ENCODE measurements at regions of chr1 and their contacts with region 1.

Region 1: DNA sequence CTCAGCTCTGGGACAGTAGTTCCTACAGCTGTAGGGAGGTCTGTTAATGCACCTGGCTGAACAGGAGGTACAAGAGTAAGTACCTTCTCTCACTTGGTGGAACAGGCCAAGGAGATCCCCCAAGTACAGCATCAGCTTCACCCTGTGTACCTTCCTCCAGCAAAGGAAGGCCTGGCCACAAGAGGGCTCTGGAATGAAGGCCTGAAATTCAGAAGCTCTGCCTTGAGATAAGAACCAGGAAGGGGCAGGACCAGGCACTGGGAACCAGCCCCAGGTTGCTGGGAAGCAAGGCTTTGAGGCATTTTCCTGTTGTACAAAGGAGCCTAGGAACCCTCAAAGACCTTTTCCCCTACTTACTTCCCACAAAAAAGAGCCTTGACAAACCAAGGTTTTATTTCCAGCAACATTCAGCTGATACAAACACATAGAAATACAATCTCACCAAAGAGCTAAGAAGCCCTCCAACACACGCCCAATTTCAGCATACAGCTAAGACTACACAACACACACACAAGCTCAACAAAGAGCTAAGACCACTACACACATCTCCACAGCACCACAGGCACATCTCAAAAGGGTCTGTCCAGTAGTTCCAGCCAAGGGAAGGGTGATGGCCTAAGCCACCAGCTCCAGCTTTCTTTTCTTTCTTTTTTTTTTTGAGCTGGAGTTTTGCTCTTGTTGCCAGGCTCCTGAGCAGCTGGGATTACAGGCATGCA is 23.5 kb downstream of the F11R start:
- DNase-seq: peak; percentile 36 to 54 (median 53)
- H3K4me3 ChIP-seq: no peak overlapping the region
- H3K4me3 Mint-ChIP-seq: no peak overlapping the region
- H3K27ac ChIP-seq: peak overlapping the region; percentile 12 to 61
- H3K27ac Mint-ChIP-seq: peak overlapping the region; percentile 15 to 84 (median 40)
- H3K4me1 ChIP-seq: peaks cover 4 to 5% of the 10 kb centered on the region in 2 donors
- H3K4me1 Mint-ChIP-seq: peaks cover 10% of the 10 kb centered on the region
- H3K27me3 ChIP-seq: no peaks in the 10 kb centered on the region
- H3K27me3 Mint-ChIP-seq: peaks cover 0 to 1% (median 0%) of the 10 kb centered on the region in 3 donors
- CTCF ChIP-seq: peak; percentile 70

Region 2: DNA sequence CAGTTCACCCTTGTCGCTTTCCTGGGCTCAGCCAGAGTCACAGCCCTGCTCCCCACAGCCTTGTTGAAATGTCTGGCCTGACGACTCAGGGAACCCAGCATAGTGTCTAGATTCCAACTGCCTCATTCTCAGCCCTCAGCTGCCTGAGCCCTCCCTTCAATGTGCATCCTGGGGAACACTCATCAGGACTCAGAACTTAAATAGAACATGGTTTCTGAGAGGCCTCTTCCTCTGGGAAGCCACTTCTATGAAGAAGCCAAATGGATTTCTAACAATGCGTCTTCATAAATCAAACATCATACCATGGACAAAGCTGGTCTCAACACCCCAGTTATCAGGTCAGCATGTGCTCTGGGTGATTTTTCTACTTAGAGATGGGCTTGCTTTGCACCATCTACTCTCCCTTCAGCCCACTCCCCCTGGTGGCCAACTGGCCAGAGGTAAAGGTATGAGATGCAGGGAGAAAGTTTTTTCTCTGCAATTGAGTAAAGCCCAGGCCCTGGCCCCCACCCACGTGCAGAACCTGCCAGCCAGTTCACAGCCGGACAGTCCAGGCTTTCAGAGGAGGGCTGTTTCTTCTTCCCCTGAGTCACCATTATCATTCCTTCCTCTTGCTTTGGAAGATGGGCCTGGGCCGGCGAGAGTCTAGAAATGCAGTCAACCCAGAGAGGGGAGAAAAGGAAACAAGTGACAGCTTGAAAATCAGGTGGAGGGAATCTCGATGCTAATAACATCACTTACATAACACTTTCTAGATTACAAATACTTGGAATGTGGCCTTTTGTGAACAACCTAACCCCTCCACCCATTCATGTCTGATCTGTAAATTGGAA is 166.9 kb before region 1 on chr1:
- intact Hi-C with region 1: loop called in 1 of 2 experiments (anchors 5 kb)
- DNase-seq: peak in 2 of 3 donors; percentile 27 to 46
- H3K4me3 ChIP-seq: no peak overlapping the region
- H3K4me3 Mint-ChIP-seq: no peak overlapping the region
- H3K27ac ChIP-seq: no peak overlapping the region
- H3K27ac Mint-ChIP-seq: peak overlapping the region in 3 of 7 donors; percentile 23 to 35 (median 26)
- H3K4me1 ChIP-seq: peaks cover 0 to 5% of the 10 kb centered on the region in 2 donors
- H3K4me1 Mint-ChIP-seq: peaks cover 11% of the 10 kb centered on the region
- H3K27me3 ChIP-seq: no peaks in the 10 kb centered on the region
- H3K27me3 Mint-ChIP-seq: peaks cover 0 to 2% (median 0%) of the 10 kb centered on the region in 3 donors
- CTCF ChIP-seq: peak; percentile 56

Region 3: DNA sequence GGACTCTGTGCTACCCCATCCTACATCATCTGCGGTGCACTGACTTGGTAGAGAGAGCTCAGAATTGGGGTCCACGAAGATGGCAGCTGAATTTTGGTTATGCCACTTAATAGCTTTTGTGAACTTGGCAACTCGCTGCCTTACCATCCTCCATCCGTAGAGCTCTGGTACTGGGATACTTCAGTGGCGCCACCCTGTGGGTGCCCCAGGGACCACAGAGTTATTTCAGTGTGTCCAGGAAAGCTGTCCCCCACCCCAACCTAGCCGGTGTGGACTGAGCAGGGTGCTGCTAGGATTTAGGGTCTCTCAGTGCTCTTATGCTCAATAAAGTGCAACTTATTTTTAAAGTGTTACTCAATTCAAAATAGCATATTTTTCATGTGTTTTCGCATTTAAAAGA is 57.3 kb after region 1 on chr1:
- intact Hi-C with region 1: loop called in 1 of 2 experiments (anchors 10 kb)
- DNase-seq: peak in 1 of 3 donors; percentile 43
- H3K4me3 ChIP-seq: no peak overlapping the region
- H3K4me3 Mint-ChIP-seq: no peak overlapping the region
- H3K27ac ChIP-seq: peak overlapping the region in 1 of 2 donors; percentile 24
- H3K27ac Mint-ChIP-seq: peak overlapping the region in 2 of 7 donors; percentile 22 to 52
- H3K4me1 ChIP-seq: peaks cover 2 to 18% of the 10 kb centered on the region in 2 donors
- H3K4me1 Mint-ChIP-seq: peaks cover 26% of the 10 kb centered on the region
- H3K27me3 ChIP-seq: no peaks in the 10 kb centered on the region
- H3K27me3 Mint-ChIP-seq: no peaks in the 10 kb centered on the region
- CTCF ChIP-seq: peak; percentile 52

Region 4: DNA sequence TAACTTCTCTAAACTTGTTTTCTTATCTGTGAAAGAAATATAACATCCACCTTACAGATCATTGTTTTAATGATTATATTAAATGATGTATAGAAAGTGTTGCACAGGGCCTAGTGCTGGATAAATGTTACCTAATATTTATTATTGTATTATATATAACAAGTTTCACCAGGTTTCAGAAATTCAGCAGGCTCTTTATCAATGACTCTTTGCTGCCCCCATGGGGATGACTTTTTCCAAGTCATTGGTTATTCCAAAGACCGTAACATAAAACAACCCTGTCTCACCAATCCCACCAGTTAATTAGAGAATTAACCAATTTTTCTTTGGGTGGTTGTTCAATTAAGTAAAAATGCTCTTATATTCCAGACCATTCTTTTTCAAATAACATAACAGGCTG is 142.3 kb after region 1 on chr1:
- intact Hi-C with region 1: loop called in 1 of 2 experiments (anchors 10 kb)
- DNase-seq: peak; percentile 47 to 60 (median 51)
- H3K4me3 ChIP-seq: no peak overlapping the region
- H3K4me3 Mint-ChIP-seq: no peak overlapping the region
- H3K27ac ChIP-seq: peak overlapping the region in 1 of 2 donors; percentile 88
- H3K27ac Mint-ChIP-seq: peak overlapping the region in 5 of 7 donors; percentile 35 to 97 (median 86)
- H3K4me1 ChIP-seq: peaks cover 40 to 42% of the 10 kb centered on the region in 2 donors
- H3K4me1 Mint-ChIP-seq: peaks cover 48% of the 10 kb centered on the region
- H3K27me3 ChIP-seq: no peaks in the 10 kb centered on the region
- H3K27me3 Mint-ChIP-seq: no peaks in the 10 kb centered on the region
- CTCF ChIP-seq: peak; percentile 73